Activated CD8-positive, alpha-beta T cell treated with anti-CD3 and anti-CD28 coated beads, Interleukin-2, amount 10 ng/mL, durations not matched to agents 7 days and 5 days (primary cell): ENCODE measurements at regions of chr9 and their contacts with region 1.

Region 1: GRCh38 chr9:6757456-6758247 is at the start of gene KDM4C:
- DNase-seq: peak; percentile 95
- ATAC-seq: peak; percentile 87
- H3K4me3 Mint-ChIP-seq: peak within 1 kb of the TSS; percentile 91
- H3K27ac Mint-ChIP-seq: peak within 1 kb of the TSS; percentile 97
- H3K4me1 Mint-ChIP-seq: peaks cover 19% of the 10 kb centered on the region
- H3K27me3 Mint-ChIP-seq: no peaks in the 10 kb centered on the region
- total RNA-seq, gene KDM4C: 52.9 to 53.4 TPM

Region 2: DNA sequence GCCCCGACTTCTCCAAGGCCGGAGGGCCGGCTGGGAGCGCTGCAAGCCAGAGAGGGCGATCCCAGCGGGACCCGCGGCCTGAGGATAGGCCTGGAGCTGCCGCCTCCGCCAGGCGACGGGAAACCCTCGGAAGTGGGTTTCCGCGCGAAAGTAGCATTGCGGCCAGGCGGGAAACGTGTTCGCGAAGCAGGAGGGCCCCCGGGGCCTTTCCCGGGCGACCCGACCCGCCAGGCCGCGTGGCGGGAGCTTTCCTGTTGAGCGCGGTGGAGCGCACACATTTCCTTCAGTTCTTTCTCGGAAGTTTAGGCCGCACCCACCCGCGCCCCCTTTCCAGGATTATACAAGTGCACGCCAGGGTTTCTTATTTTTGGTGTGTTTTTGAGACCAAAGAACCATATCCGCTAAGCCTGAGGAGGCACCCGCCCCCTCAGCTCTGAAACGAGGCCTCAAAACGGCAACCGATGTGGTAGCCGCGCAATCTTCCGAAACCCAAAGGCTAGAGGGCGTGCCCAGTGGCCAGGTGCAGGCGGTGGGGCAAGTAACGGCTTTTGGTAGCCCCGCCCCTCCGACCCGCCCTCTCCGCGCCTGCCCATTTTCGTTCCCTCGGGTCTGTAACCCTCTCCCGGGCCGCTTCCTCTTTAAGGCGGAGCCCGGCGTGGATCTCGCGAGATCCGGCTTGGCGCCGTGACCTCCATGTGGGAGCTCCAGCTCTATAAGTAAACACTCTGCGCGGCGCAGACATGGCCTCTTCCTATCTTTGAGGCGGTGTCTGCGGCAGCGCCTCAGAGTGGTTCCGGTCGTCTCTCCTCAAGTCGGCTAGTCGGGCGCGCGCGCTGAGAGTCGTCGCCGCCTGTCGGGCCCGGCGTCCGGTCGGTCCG is 344.9 kb before region 1 on chr9 and contains the start of gene UHRF2:
- CTCF ChIA-PET with region 1: no interaction called
- POLR2A ChIA-PET with region 1: interaction called, 35 read pairs
- DNase-seq: peak; percentile 100
- ATAC-seq: peak; percentile 91
- H3K4me3 Mint-ChIP-seq: peak within 1 kb of the TSS; percentile 86
- H3K27ac Mint-ChIP-seq: peak within 1 kb of the TSS; percentile 95
- H3K4me1 Mint-ChIP-seq: peaks cover 32% of the 10 kb centered on the region
- H3K27me3 Mint-ChIP-seq: peaks cover 22% of the 10 kb centered on the region
- total RNA-seq, gene UHRF2: 59.3 to 68.6 TPM

Region 3: DNA sequence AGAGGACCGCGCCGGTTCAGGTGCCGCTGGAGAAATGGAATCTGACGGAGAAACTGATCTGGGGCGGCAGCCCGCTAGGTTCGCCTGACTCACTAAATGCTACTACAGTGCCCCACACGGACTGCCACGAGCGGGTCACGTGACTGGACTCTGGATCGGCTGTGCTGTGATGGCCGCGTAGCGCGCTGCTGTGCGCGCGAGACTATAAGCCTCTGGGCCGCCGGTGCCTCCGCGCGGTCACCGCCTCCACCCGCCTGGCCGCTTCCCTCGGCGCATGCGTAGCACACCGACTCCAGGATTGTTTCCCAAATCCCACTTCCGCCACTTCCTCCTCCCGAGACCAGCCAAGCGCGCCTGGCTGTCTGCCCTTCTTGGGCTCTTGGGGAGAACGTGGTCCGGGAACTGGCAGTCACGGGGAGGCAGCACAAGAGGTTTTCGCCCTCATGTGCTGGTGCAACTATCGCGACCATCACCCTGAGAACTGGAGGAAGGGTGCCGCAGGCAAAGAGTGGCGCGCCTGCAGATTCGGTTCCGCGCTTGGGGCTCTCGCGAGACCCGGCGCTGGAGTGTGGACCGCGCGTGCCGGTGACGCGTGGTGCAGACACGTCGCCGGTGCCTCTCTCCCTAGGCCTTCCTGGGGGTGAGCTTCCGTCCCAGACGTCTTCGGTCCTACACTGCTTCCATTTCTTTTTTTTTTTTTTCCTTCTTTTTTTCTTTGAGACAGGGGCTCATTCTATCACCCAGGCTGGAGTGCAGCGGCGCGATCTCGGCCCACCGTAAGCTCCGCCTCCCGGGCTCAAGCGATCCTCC is 76.3 kb before region 1 on chr9:
- CTCF ChIA-PET with region 1: no interaction called
- POLR2A ChIA-PET with region 1: interaction called, 51 read pairs
- DNase-seq: peak; percentile 95
- ATAC-seq: peak; percentile 94
- H3K4me3 Mint-ChIP-seq: peak overlapping the region; percentile 95
- H3K27ac Mint-ChIP-seq: peak overlapping the region; percentile 100
- H3K4me1 Mint-ChIP-seq: peaks cover 22% of the 10 kb centered on the region
- H3K27me3 Mint-ChIP-seq: no peaks in the 10 kb centered on the region

Region 4: GRCh38 chr9:6703898-6704639 is 53.6 kb before region 1 on chr9:
- CTCF ChIA-PET with region 1: no interaction called
- POLR2A ChIA-PET with region 1: interaction called, 53 read pairs
- DNase-seq: peak; percentile 91
- ATAC-seq: peak; percentile 91
- H3K4me3 Mint-ChIP-seq: peak overlapping the region; percentile 91
- H3K27ac Mint-ChIP-seq: peak overlapping the region; percentile 95
- H3K4me1 Mint-ChIP-seq: peaks cover 14% of the 10 kb centered on the region
- H3K27me3 Mint-ChIP-seq: peaks cover 5% of the 10 kb centered on the region

Region 5: DNA sequence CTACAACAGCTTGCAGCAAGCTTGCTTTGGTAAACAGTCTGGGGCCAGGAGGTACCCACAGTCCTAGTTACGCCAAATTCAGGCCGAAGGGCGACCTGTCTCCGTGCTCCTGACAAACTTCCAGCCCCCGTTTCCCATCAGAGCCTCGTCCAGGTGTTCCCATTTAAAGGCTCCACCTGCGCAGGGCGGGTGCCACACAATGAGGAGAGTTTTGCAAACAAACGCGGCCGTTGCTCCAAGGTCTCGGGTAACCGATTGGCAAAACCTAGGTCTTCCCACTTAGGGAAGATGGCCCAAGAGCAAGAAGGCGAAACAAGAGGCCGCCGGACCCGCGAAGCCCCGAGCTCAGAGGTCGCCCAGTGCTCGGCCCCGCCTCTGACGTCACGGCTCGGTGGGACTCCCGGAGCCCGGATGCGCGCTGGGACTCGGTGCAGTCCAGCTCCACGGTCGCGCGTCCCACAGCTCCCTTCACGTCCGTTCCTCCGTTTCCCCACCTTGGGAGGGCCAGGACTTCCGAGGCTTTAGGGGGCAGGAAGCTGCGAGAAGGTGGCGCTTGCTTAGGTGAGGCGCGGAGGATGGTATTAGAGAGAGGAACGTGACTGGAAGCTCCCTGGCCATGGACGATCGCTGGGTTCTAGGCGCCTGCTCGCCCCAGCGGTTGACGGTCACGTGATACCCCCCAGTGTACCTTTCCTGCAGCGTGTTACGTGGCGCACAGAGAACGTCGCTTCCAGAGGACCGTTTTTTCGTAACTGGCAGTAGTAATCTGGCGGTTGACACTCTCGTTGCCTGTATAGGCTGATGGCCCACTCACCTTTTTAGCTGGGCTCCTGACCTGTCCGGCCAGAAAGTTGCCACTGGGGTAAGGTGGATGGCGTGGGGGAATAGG is 41.7 kb before region 1 on chr9:
- CTCF ChIA-PET with region 1: no interaction called
- POLR2A ChIA-PET with region 1: interaction called, 46 read pairs
- DNase-seq: peak; percentile 84
- ATAC-seq: peak; percentile 94
- H3K4me3 Mint-ChIP-seq: peak overlapping the region; percentile 82
- H3K27ac Mint-ChIP-seq: peak overlapping the region; percentile 92
- H3K4me1 Mint-ChIP-seq: peaks cover 6% of the 10 kb centered on the region
- H3K27me3 Mint-ChIP-seq: peaks cover 2% of the 10 kb centered on the region

Region 6: GRCh38 chr9:6739218-6739617 is 18.4 kb before region 1 on chr9:
- CTCF ChIA-PET with region 1: no interaction called
- POLR2A ChIA-PET with region 1: interaction called, 10 read pairs
- DNase-seq: no peak
- ATAC-seq: no peak
- H3K4me3 Mint-ChIP-seq: no peak overlapping the region
- H3K27ac Mint-ChIP-seq: no peak overlapping the region
- H3K4me1 Mint-ChIP-seq: no peaks in the 10 kb centered on the region
- H3K27me3 Mint-ChIP-seq: no peaks in the 10 kb centered on the region